ENCODE measurements at regions of chr1 and their contacts with region 1.

Region 1: DNA sequence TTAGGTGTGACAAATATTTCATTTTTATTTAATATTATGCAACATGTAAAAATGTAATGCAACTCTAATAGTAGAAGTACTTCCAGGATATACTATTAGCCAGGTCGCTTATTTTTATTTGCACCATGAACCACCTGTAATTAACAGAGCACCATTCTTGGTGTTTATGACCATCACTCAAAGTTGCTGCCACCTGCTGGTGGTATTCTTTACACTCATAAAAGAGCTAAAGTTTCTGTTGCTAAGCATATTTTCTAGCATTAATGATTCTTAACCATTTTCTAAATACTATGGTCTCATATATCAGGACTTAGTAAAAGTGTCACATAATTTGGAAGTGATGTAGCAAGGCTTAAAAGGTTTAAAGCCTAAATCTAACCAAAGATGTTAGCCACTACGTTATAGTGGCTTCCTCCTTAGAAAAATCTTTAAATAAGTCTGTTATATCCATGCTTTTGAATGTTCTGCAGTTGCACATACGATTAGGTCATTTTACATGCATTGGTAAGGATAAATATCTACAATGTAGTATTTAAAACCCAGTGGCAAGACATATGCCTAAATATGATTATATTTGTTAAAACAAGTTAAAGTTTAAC is 244.5 kb downstream of the NEGR1 start:
- DNase-seq: peak; percentile 60
- H3K4me3 Mint-ChIP-seq: no peak overlapping the region
- H3K27ac Mint-ChIP-seq: no peak overlapping the region
- H3K4me1 Mint-ChIP-seq: no peaks in the 10 kb centered on the region
- H3K27me3 Mint-ChIP-seq: peaks cover 27% of the 10 kb centered on the region
- CTCF ChIP-seq: peak; percentile 56

Region 2: GRCh38 chr1:71196685-71197084 is 841.2 kb before region 1 on chr1:
- CTCF ChIA-PET with region 1: interaction called, 15 read pairs
- POLR2A ChIA-PET with region 1: no interaction called
- intact Hi-C with region 1: loop called (anchors 1 kb)
- DNase-seq: peak; percentile 45
- H3K4me3 Mint-ChIP-seq: no peak overlapping the region
- H3K27ac Mint-ChIP-seq: no peak overlapping the region
- H3K4me1 Mint-ChIP-seq: no peaks in the 10 kb centered on the region
- H3K27me3 Mint-ChIP-seq: no peaks in the 10 kb centered on the region
- CTCF ChIP-seq: peak; percentile 36

Region 3: DNA sequence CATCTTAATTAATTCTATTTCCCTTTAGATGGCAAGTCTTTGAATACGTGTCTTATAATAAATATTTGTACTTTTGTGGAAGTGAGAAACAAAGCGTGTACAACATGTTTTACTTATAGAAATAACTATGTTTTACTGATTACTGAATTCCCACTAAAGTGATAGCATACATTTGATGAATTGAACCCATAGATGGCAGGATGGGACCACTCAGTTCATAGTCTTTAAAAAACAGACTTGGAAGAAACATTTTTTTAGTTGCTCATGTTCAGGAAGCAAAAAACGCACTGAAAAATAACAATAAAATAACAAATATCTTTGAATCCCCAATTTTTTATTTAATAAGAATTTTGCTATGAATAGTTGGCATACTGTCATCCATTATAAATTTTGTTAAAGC is 449.9 kb before region 1 on chr1:
- CTCF ChIA-PET with region 1: interaction called, 11 read pairs
- POLR2A ChIA-PET with region 1: interaction called, 4 read pairs
- intact Hi-C with region 1: loop called (anchors 1 kb)
- DNase-seq: peak; percentile 29
- H3K4me3 Mint-ChIP-seq: no peak overlapping the region
- H3K27ac Mint-ChIP-seq: no peak overlapping the region
- H3K4me1 Mint-ChIP-seq: no peaks in the 10 kb centered on the region
- H3K27me3 Mint-ChIP-seq: no peaks in the 10 kb centered on the region
- CTCF ChIP-seq: peak; percentile 53

Region 4: GRCh38 chr1:71593523-71593922 is 444.3 kb before region 1 on chr1:
- CTCF ChIA-PET with region 1: interaction called, 10 read pairs
- POLR2A ChIA-PET with region 1: interaction called, 3 read pairs
- intact Hi-C with region 1: loop called (anchors 1 kb)
- DNase-seq: peak; percentile 22
- H3K4me3 Mint-ChIP-seq: no peak overlapping the region
- H3K27ac Mint-ChIP-seq: no peak overlapping the region
- H3K4me1 Mint-ChIP-seq: no peaks in the 10 kb centered on the region
- H3K27me3 Mint-ChIP-seq: no peaks in the 10 kb centered on the region
- CTCF ChIP-seq: peak; percentile 21

Region 5: GRCh38 chr1:72397786-72398185 is 359.9 kb after region 1 on chr1:
- CTCF ChIA-PET with region 1: no interaction called
- POLR2A ChIA-PET with region 1: no interaction called
- intact Hi-C with region 1: no loop called
- DNase-seq: peak; percentile 80
- H3K4me3 Mint-ChIP-seq: no peak overlapping the region
- H3K27ac Mint-ChIP-seq: no peak overlapping the region
- H3K4me1 Mint-ChIP-seq: peaks cover 5% of the 10 kb centered on the region
- H3K27me3 Mint-ChIP-seq: no peaks in the 10 kb centered on the region
- CTCF ChIP-seq: no peak

Measured in MCF 10A (cell line).